Calu3 (cell line): ENCODE measurements at regions of chr1 and their contacts with region 1.

Region 1: DNA sequence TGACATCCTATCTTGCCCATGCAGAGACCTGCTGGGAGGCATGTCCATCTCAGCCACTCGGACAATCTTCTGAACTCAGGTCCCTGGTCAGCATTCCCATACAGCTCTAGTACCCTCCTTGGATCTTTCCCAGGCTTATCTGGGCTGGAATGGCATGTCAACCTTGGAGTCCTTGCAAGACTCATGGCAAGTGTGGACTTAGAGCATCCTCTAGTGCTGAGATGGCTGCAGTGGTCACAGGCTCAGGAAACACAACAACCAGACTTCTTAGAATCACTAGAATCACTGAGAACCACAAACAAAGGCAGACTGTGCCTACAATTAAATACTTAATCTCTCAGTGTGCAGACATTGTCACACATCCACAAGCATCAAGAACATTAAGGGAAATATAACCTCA is 73.1 kb upstream of the TSHB start:
- DNase-seq: peak; percentile 3
- H3K4me3 Mint-ChIP-seq: no peak overlapping the region
- H3K27ac Mint-ChIP-seq: no peak overlapping the region
- H3K4me1 Mint-ChIP-seq: no peaks in the 10 kb centered on the region
- H3K27me3 Mint-ChIP-seq: peaks cover 46% of the 10 kb centered on the region
- CTCF ChIP-seq: no peak

Region 2: DNA sequence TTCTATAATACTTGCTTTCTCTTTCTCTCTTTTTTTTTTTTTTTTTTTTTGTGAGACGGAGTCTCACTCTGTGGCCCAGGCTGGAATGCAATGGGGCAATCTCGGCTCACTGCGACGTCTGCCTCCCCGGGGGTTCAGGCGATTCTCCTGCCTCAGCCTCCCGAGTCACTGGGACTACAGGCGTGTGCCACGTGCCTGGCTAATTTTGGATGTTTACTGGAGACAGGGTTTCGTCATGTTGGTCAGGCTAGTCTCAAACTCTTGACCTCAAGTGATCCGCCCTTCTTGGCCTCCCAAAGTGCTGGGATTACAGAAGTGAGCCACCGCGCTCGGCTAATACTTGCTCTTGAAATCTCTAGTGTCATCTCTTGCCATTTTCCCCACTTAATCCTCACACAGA is 103.0 kb before region 1 on chr1:
- CTCF ChIA-PET with region 1: interaction called, 13 read pairs
- intact Hi-C with region 1: no loop called
- DNase-seq: no peak
- H3K4me3 Mint-ChIP-seq: no peak overlapping the region
- H3K27ac Mint-ChIP-seq: no peak overlapping the region
- H3K4me1 Mint-ChIP-seq: no peaks in the 10 kb centered on the region
- H3K27me3 Mint-ChIP-seq: peaks cover 9% of the 10 kb centered on the region
- CTCF ChIP-seq: no peak